ENCODE measurements at regions of chr4 and their contacts with region 1.

Region 1: DNA sequence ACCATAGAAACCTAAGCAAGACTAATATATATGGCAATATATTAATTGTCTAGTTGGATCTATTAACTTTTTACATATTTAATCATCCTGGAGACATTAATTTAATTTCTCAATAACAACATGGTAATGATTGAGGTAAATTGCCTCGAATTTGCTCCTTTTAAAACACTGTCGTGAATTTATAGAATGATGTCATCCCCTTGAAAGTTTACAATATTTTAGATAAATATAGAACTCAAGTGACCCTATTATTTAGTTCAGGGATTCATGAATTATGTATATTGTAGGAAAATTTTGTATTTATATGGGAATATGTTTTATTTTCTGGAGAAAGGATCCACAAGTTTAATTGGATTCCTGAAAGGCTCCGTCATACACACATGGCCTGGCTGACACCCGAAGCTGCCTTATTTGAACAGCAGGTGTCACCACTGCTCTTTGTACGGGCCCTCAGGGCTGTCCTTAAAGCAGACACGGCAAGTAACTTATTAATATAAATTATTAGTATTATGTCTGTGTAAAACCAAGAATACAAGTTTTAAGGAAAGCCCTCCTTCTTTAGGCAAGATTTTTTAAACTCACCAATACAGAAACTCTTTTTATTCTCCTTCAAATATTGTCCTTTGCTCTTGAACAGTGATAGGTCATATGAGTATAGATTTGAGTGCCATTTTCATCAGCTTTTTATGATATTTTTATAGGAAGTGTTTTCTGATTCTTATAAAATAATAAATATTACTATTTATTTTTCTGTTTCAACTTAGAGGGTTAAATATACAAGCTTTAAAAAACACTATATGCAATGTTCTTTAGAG is 1.9 kb upstream of the PLRG1 start:
- DNase-seq: peak; percentile 28
- ATAC-seq: peak; percentile 64
- H3K4me3 ChIP-seq: no peak overlapping the region
- H3K27ac ChIP-seq: no peak overlapping the region
- H3K4me1 ChIP-seq: peaks cover 3% of the 10 kb centered on the region; the same call in 1 of the 2 replicates
- H3K27me3 ChIP-seq: no peaks in the 10 kb centered on the region
- CTCF ChIP-seq: peak; percentile 79 to 82 (median 79)
- EP300 ChIP-seq: no peak
- POLR2A ChIP-seq: no peak
- RAD21 ChIP-seq: peak; percentile 94

Region 2: GRCh38 chr4:154444958-154445357 is 107.1 kb before region 1 on chr4:
- CTCF ChIA-PET with region 1: no interaction called
- POLR2A ChIA-PET with region 1: no interaction called
- RAD21 ChIA-PET with region 1: no interaction called
- SMC1A ChIA-PET with region 1: no interaction called
- in situ Hi-C with region 1: no loop called
- intact Hi-C with region 1: no loop called
- DNase-seq: no peak
- ATAC-seq: no peak
- H3K4me3 ChIP-seq: no peak overlapping the region
- H3K27ac ChIP-seq: no peak overlapping the region
- H3K4me1 ChIP-seq: no peaks in the 10 kb centered on the region
- H3K27me3 ChIP-seq: peaks cover 0 to 2% of the 10 kb centered on the region in 2 experiments; a peak in 3 of 4 replicates
- CTCF ChIP-seq: no peak
- EP300 ChIP-seq: no peak
- POLR2A ChIP-seq: no peak
- RAD21 ChIP-seq: no peak

Region 3: GRCh38 chr4:154534296-154534695 is 17.8 kb before region 1 on chr4:
- CTCF ChIA-PET with region 1: interaction called, 5 read pairs
- POLR2A ChIA-PET with region 1: no interaction called
- RAD21 ChIA-PET with region 1: interaction called, 7 read pairs
- SMC1A ChIA-PET with region 1: interaction called, 13 read pairs
- in situ Hi-C with region 1: no loop called
- intact Hi-C with region 1: no loop called
- DNase-seq: no peak
- ATAC-seq: no peak
- H3K4me3 ChIP-seq: no peak overlapping the region
- H3K27ac ChIP-seq: no peak overlapping the region
- H3K4me1 ChIP-seq: no peaks in the 10 kb centered on the region
- H3K27me3 ChIP-seq: no peaks in the 10 kb centered on the region
- CTCF ChIP-seq: no peak
- EP300 ChIP-seq: no peak
- POLR2A ChIP-seq: no peak
- RAD21 ChIP-seq: no peak

Region 4: GRCh38 chr4:154626793-154627484 is 74.9 kb after region 1 on chr4:
- CTCF ChIA-PET with region 1: interaction called, 796 read pairs
- POLR2A ChIA-PET with region 1: interaction called, 3 read pairs
- RAD21 ChIA-PET with region 1: interaction called, 28 read pairs
- SMC1A ChIA-PET with region 1: interaction called, 119 read pairs
- in situ Hi-C with region 1: no loop called
- intact Hi-C with region 1: loop called (anchors 1 kb)
- DNase-seq: no peak
- ATAC-seq: peak; percentile 98
- H3K4me3 ChIP-seq: no peak overlapping the region
- H3K27ac ChIP-seq: no peak overlapping the region
- H3K4me1 ChIP-seq: no peaks in the 10 kb centered on the region
- H3K27me3 ChIP-seq: peaks cover 3% of the 10 kb centered on the region in 2 experiments
- CTCF ChIP-seq: peak; percentile 52 to 75 (median 64)
- EP300 ChIP-seq: no peak
- POLR2A ChIP-seq: no peak
- RAD21 ChIP-seq: peak; percentile 13; the same call in 1 of the 2 replicates

Region 5: DNA sequence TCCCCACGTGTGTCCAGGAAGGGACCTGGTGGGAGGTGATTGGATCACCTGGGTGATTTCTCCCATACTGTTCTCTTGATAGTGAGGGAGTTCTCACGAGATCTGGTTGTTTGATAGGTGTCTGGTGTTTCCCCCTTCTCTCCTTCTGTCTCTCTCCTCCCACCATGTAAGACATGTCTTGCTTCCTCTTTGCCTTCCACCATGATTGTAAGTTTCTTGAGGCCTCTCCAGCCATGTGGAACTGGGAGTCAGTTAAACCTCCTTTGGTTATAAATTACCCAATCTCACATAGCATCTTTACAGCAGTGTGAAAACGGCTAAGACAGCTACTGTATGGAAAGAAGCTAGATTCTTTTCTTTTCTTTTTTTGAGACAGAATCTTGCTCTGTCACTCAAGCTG is 82.0 kb after region 1 on chr4:
- CTCF ChIA-PET with region 1: interaction called, 20 read pairs
- POLR2A ChIA-PET with region 1: no interaction called
- RAD21 ChIA-PET with region 1: interaction called, 4 read pairs
- SMC1A ChIA-PET with region 1: interaction called, 3 read pairs
- in situ Hi-C with region 1: no loop called
- intact Hi-C with region 1: no loop called
- DNase-seq: no peak
- ATAC-seq: peak; percentile 48
- H3K4me3 ChIP-seq: no peak overlapping the region
- H3K27ac ChIP-seq: no peak overlapping the region
- H3K4me1 ChIP-seq: no peaks in the 10 kb centered on the region
- H3K27me3 ChIP-seq: no peaks in the 10 kb centered on the region
- CTCF ChIP-seq: no peak
- EP300 ChIP-seq: no peak
- POLR2A ChIP-seq: no peak
- RAD21 ChIP-seq: no peak

Region 6: GRCh38 chr4:154779362-154779947 is 227.4 kb after region 1 on chr4:
- CTCF ChIA-PET with region 1: interaction called, 3 read pairs
- POLR2A ChIA-PET with region 1: no interaction called
- RAD21 ChIA-PET with region 1: interaction called, 3 read pairs
- SMC1A ChIA-PET with region 1: interaction called, 4 read pairs
- in situ Hi-C with region 1: no loop called
- intact Hi-C with region 1: loop called (anchors 1 kb)
- DNase-seq: no peak
- ATAC-seq: no peak
- H3K4me3 ChIP-seq: no peak overlapping the region
- H3K27ac ChIP-seq: no peak overlapping the region
- H3K4me1 ChIP-seq: no peaks in the 10 kb centered on the region
- H3K27me3 ChIP-seq: no peaks in the 10 kb centered on the region
- CTCF ChIP-seq: peak in 2 of 3 experiments; percentile 14 to 39; a peak in 4 of 6 replicates
- EP300 ChIP-seq: no peak
- POLR2A ChIP-seq: no peak
- RAD21 ChIP-seq: peak; percentile 31

Region 7: GRCh38 chr4:155371432-155372043 is 819.5 kb after region 1 on chr4:
- CTCF ChIA-PET with region 1: interaction called, 3 read pairs
- POLR2A ChIA-PET with region 1: no interaction called
- RAD21 ChIA-PET with region 1: interaction called, 4 read pairs
- SMC1A ChIA-PET with region 1: no interaction called
- in situ Hi-C with region 1: loop called (anchors 5 kb)
- intact Hi-C with region 1: loop called (anchors 5 kb)
- DNase-seq: no peak
- ATAC-seq: peak; percentile 54
- H3K4me3 ChIP-seq: no peak overlapping the region
- H3K27ac ChIP-seq: no peak overlapping the region
- H3K4me1 ChIP-seq: peaks cover 3% of the 10 kb centered on the region; the same call in 1 of the 2 replicates
- H3K27me3 ChIP-seq: no peaks in the 10 kb centered on the region
- CTCF ChIP-seq: peak in 2 of 3 experiments; percentile 19 to 39; a peak in 2 of 6 replicates
- EP300 ChIP-seq: no peak
- POLR2A ChIP-seq: no peak
- RAD21 ChIP-seq: peak; percentile 36; the same call in 1 of the 2 replicates

Measured in GM12878 (cell line).